Activated T-helper 1 cell treated with anti-CD3 and anti-CD28 coated beads, Interleukin-12 subunit alpha, Interleukin-12 subunit beta, Interleukin-2, Interleukin-4 antibody, amounts not matched to agents 30 ng/mL and 10 ng/mL and 1 ng/mL, durations not matched to agents 14 hours and 24 hours and 36 hours (primary cell): ENCODE measurements at regions of chr19 and their contacts with region 1.

Region 1: GRCh38 chr19:55279770-55280643 is at the start of gene HSPBP1:
- DNase-seq: peak; percentile 95
- H3K4me3 Mint-ChIP-seq: peak within 1 kb of the TSS; percentile 99
- H3K27ac Mint-ChIP-seq: peak within 1 kb of the TSS; percentile 96
- H3K4me1 Mint-ChIP-seq: peaks cover 51% of the 10 kb centered on the region
- H3K27me3 Mint-ChIP-seq: peaks cover 7% of the 10 kb centered on the region
- total RNA-seq, gene HSPBP1: 66.4 and 69.6 TPM in 2 replicates

Region 2: DNA sequence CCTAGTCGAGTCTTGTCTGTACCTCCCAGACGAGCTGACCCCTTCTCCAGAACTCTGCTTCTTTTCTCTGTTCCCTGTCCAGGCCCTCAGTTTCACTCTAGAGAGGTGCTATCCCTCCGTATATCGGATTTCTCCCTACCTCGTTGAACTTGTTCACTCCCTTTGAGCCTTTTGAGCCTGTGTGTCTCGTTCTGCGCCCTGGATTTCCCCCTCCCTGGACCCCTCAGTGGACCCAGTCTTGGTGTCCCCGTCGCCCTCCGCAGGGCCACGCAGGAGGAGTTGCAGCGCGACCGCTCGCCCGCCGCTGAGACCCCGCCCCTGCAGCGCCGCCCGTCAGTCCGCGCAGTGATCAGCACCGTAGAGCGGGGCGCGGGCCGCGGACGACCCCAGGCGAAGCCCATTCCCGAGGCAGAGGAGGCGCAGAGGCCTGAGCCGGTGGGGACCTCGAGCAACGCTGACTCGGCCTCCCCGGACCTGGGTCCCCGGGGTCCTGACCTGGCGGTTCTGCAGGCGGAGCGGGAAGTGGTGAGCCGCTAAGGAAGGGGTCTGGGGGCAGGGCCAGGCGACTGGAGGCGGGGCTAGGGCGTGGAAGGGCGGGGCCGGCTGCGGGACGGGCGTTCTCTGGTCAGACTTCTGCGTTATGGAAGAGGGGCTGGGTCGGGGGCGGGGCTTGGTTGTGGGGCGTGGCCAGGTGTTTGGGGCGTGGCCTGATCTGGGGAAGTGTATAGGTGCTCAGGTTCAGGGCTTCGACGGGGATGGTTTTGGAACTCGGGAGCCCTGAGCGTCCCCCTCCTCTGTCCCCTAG is 198.8 kb before region 1 on chr19:
- intact Hi-C with region 1: loop called (anchors 1 kb)
- DNase-seq: peak; percentile 92
- H3K4me3 Mint-ChIP-seq: peak overlapping the region; percentile 88
- H3K27ac Mint-ChIP-seq: peak overlapping the region; percentile 67
- H3K4me1 Mint-ChIP-seq: peaks cover 23% of the 10 kb centered on the region
- H3K27me3 Mint-ChIP-seq: peaks cover 35% of the 10 kb centered on the region

Region 3: GRCh38 chr19:55301459-55302317 is 21.7 kb after region 1 on chr19:
- intact Hi-C with region 1: loop called (anchors 1 kb)
- DNase-seq: peak; percentile 91
- H3K4me3 Mint-ChIP-seq: peak overlapping the region; percentile 88
- H3K27ac Mint-ChIP-seq: peak overlapping the region; percentile 88
- H3K4me1 Mint-ChIP-seq: peaks cover 17% of the 10 kb centered on the region
- H3K27me3 Mint-ChIP-seq: no peaks in the 10 kb centered on the region

Region 4: GRCh38 chr19:55353803-55354697 is 74.0 kb after region 1 on chr19:
- intact Hi-C with region 1: loop called (anchors 1 kb)
- DNase-seq: peak; percentile 45
- H3K4me3 Mint-ChIP-seq: peak overlapping the region; percentile 82
- H3K27ac Mint-ChIP-seq: no peak overlapping the region
- H3K4me1 Mint-ChIP-seq: peaks cover 26% of the 10 kb centered on the region
- H3K27me3 Mint-ChIP-seq: peaks cover 44% of the 10 kb centered on the region

Region 5: DNA sequence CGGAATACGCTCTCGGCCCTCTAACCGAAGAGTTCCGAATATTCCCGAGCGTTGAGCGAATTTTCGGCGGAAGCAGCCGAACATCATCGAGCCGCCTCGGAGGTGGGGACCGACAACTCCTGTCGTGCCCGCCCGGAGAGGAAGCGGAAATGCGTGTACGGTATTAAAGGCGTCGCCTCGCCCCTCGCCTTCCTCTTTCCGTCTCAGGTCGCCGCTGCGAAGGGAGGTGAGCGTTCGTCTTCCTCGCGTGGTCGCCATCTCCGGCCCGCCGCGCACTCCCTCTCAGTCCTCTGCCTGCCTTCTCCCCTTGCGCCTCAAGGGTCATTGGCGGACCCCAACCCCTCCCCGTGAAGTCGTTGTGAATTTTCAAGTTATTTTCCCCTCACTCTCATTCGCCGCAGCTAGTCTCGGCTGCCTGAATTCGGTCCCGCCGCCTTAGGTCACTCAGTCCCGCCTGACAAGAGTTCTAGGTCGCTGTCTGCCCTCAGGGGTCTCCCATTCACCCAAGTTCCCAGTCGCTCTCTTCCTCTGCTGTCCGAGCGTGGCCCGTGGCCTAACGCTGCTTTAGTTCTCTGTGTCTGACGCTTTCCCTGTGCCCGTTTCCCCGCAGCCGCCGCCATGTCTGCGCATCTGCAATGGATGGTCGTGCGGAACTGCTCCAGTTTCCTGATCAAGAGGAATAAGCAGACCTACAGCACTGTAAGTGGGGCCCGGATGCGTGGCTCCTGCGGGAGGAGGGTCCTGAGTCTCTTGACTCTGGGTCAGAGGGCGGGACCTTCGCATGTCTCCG is 105.9 kb after region 1 on chr19 and contains the start of gene RPL28:
- intact Hi-C with region 1: loop called (anchors 1 kb)
- DNase-seq: peak; percentile 99
- H3K4me3 Mint-ChIP-seq: peak within 1 kb of the TSS; percentile 99
- H3K27ac Mint-ChIP-seq: peak within 1 kb of the TSS; percentile 96
- H3K4me1 Mint-ChIP-seq: peaks cover 43% of the 10 kb centered on the region
- H3K27me3 Mint-ChIP-seq: no peaks in the 10 kb centered on the region
- total RNA-seq, gene RPL28: 1,835 and 1,847 TPM in 2 replicates

Region 6: DNA sequence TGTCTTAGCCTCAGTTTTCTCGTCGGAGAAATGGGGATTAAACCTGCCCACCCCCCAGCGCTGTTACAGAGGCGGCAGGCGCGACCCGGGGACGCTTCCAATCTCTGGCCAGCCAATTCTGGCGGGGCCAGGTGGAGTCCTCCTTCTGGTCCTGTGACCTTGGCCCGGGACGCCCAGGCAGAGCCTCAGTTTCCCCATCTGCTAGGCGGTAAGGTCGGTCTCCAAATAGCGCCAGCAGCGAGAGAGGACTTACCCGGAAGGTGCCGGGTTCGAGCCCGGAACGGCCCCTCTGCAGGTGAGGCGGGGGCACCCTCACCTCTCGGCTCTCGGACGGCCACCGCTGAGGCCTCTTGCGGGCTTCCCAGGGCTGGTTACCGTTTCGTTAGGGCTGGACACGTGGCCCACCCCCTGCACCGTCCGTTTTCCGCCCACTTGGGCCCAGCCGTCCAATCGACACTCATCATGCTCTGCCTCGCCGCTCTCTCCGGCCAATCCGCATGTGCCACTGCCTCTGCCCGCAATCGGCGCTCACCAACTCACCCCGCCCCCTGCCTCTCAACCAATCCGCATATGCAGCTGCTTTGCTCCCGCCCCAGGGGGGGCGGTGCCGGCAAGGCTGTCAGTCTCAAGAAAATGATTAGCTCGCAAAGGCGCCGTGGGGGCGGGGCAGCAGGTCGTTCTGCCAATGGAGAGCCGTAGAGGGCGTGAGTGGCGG is 181.4 kb after region 1 on chr19 and contains the start of gene ISOC2:
- intact Hi-C with region 1: loop called (anchors 1 kb)
- DNase-seq: peak; percentile 100
- H3K4me3 Mint-ChIP-seq: peak within 1 kb of the TSS; percentile 81
- H3K27ac Mint-ChIP-seq: peak within 1 kb of the TSS; percentile 77
- H3K4me1 Mint-ChIP-seq: peaks cover 5% of the 10 kb centered on the region
- H3K27me3 Mint-ChIP-seq: peaks cover 2% of the 10 kb centered on the region
- total RNA-seq, gene ISOC2: 31.3 and 34.3 TPM in 2 replicates

Region 7: GRCh38 chr19:55599468-55600279 is 319.7 kb after region 1 on chr19 and contains the start of gene FIZ1:
- intact Hi-C with region 1: loop called (anchors 1 kb)
- DNase-seq: peak; percentile 95
- H3K4me3 Mint-ChIP-seq: peak within 1 kb of the TSS; percentile 93
- H3K27ac Mint-ChIP-seq: peak within 1 kb of the TSS; percentile 98
- H3K4me1 Mint-ChIP-seq: peaks cover 28% of the 10 kb centered on the region
- H3K27me3 Mint-ChIP-seq: no peaks in the 10 kb centered on the region
- total RNA-seq, gene FIZ1: 24.2 and 24.7 TPM in 2 replicates